Vagina (tissue), 2 donors: ENCODE measurements at regions of chr5 and their contacts with region 1.

Region 1: GRCh38 chr5:90071066-90071465 is 338.5 kb downstream of the CETN3 start:
- DNase-seq: no peak
- H3K4me3 ChIP-seq: no peak overlapping the region
- H3K27ac ChIP-seq: no peak overlapping the region
- H3K4me1 ChIP-seq: no peaks in the 10 kb centered on the region
- H3K27me3 ChIP-seq: no peaks in the 10 kb centered on the region
- CTCF ChIP-seq: no peak
- POLR2A ChIP-seq: no peak

Region 2: DNA sequence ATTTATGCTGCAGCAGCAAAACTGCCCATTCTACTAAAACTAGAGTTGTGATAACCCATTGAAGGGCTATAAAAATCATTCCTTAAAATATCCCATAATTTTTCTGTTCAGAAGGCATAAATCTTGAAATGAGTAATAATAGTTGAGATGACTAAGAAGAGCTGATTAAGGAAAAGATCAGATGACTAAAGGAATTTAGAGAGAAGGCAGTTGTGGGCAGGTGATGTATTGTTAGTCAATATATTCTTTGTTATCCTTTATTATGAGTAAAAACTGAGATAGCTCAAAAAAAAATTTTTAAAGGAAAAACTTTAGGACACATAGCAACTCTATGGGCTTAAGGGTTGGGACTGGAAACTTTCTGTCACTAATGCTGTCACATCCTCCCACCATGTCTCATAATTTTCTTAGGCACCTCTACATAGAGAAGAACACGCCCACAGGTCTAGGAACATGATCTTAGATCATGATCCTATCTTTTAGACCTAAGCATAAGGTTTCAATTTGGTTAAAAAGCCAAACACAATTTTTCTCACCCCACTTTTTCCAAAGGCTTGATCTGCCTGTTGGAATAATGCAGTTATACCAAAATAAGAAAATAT is 590.6 kb before region 1 on chr5:
- intact Hi-C with region 1: loop called (anchors 5 kb)
- DNase-seq: no peak
- H3K4me3 ChIP-seq: no peak overlapping the region
- H3K27ac ChIP-seq: no peak overlapping the region
- H3K4me1 ChIP-seq: no peaks in the 10 kb centered on the region
- H3K27me3 ChIP-seq: no peaks in the 10 kb centered on the region
- CTCF ChIP-seq: no peak
- POLR2A ChIP-seq: no peak

Region 3: GRCh38 chr5:90135779-90136378 is 64.8 kb after region 1 on chr5:
- intact Hi-C with region 1: loop called (anchors 2 kb)
- DNase-seq: no peak
- H3K4me3 ChIP-seq: no peak overlapping the region
- H3K27ac ChIP-seq: peak overlapping the region; percentile 8
- H3K4me1 ChIP-seq: no peaks in the 10 kb centered on the region
- H3K27me3 ChIP-seq: no peaks in the 10 kb centered on the region
- CTCF ChIP-seq: no peak
- POLR2A ChIP-seq: no peak